ENCODE measurements at regions of chr18 and their contacts with region 1.

Region 1: DNA sequence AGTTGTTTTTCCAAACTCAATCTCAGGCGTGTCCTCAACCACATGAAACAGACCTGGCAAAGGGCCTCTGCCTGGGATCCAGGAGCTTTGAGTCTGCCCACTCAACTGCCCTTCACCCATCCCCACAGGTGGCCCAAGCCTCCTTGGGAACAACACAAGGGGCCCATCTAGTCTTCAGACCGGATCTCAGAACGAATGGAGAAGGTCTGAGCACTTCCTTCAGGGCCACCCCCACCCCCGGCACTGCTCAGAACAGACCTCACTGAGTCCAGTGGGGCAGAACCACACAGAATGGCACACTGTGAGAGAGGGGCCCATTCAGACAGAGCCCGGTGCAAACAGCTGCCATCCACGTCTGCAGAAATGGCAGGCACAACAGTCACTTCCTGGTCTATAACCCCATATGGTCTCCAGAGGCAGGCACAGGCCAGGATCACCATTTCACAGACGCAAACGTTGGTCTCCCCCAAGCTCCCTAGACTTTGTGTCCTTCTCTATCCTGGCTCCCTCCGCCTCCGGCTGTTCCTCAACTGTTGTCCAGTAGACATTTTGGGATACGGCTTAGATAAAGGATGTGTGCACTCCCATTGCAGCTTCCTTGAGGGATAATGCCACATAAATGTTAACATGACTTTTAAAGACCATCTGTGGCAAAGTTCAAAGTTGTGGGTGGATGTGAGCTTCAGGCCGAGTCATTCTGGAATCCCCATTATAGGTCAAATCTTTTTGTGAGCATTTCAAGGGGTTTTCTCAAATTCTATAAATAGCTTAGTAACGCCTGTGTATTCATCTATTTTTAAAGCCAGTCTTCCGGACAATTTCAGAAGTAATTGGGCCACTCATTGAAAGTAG is 149.7 kb downstream of the SMAD7 start:
- DNase-seq: peak; percentile 49
- ATAC-seq: peak; percentile 79
- H3K4me3 Mint-ChIP-seq: no peak overlapping the region
- H3K27ac Mint-ChIP-seq: peak overlapping the region; percentile 66
- H3K4me1 Mint-ChIP-seq: peaks cover 46% of the 10 kb centered on the region
- H3K27me3 Mint-ChIP-seq: no peaks in the 10 kb centered on the region

Region 2: DNA sequence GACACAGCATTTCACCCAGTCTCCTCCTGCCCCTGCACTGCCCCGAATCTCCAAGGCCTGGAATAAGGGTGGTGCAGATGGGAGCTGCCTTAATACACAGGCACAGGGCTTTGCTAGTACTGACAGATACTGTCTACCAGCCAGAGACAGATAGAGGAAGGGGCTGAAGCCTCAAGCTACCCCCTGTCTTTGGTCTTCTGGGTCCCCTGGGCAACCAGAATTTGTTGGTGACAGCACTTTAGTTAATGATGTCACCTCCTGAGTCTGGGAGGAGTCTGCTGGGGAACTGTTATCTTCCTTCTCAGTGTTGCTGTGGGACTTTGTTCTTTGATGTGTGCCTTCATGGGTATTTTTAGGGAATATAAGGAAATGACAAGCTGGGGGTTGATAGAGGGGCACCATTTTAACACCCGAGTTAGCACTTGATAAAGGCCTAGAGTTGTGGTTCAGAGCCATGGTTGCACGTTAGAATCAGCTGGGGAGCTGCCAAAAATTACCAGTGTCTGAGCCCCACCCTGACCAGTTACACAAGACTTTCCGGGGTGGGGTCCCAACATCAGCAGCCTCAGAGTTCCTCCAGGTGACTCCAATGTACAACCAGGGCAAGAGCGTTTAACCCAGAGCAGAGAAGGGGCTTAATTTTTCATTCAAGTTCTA is 12.9 kb after region 1 on chr18:
- CTCF ChIA-PET with region 1: interaction called, 5 read pairs
- POLR2A ChIA-PET with region 1: interaction called, 4 read pairs
- intact Hi-C with region 1: loop called in 1 of 2 experiments (anchors 2 kb)
- DNase-seq: peak; percentile 15
- ATAC-seq: peak; percentile 40
- H3K4me3 Mint-ChIP-seq: no peak overlapping the region
- H3K27ac Mint-ChIP-seq: peak overlapping the region; percentile 72
- H3K4me1 Mint-ChIP-seq: peaks cover 41% of the 10 kb centered on the region
- H3K27me3 Mint-ChIP-seq: no peaks in the 10 kb centered on the region

Region 3: GRCh38 chr18:48868468-48869466 is 67.7 kb after region 1 on chr18:
- CTCF ChIA-PET with region 1: no interaction called
- POLR2A ChIA-PET with region 1: no interaction called
- intact Hi-C with region 1: loop called in 1 of 2 experiments (anchors 1 kb)
- DNase-seq: peak; percentile 73
- ATAC-seq: peak; percentile 79
- H3K4me3 Mint-ChIP-seq: peak overlapping the region; percentile 35
- H3K27ac Mint-ChIP-seq: peak overlapping the region; percentile 85
- H3K4me1 Mint-ChIP-seq: peaks cover 34% of the 10 kb centered on the region
- H3K27me3 Mint-ChIP-seq: no peaks in the 10 kb centered on the region